Pancreas (tissue), 10 donors: ENCODE measurements at regions of chr10 and their contacts with region 1.

Region 1: DNA sequence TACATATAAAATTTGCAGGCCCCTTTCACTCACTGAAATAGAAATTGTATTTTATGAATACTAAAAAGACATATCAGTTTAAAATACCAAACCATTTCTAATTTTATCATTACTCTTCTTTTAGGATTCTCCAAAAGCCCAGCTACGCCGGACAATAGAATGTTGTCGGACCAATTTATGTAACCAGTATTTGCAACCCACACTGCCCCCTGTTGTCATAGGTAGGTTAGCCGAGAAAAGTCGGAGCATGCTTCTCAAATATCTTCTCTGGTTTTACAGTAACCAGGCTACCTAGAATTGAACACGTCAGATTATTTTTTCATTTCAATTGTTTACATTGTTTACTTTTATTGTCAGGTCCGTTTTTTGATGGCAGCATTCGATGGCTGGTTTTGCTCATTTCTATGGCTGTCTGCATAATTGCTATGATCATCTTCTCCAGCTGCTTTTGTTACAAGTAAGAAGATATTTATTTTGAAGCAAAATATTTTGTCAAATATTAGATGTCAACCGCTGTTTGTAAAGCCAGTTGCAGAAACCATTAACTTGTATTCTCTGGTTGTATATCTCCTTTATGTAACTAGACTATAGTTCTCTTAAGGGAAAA is 57.6 kb downstream of the MMRN2 start:
- DNase-seq: peak in 3 of 6 donors; percentile 57 to 71 (median 64)
- ATAC-seq: peak; percentile 74 to 93 (median 81)
- H3K4me3 ChIP-seq: no peak overlapping the region
- H3K27ac ChIP-seq: no peak overlapping the region
- H3K4me1 ChIP-seq: peaks cover 11 to 15% (median 13%) of the 10 kb centered on the region in 3 donors
- H3K27me3 ChIP-seq: no peaks in the 10 kb centered on the region
- CTCF ChIP-seq: peak in 3 of 4 donors; percentile 51 to 58 (median 56)

Region 2: DNA sequence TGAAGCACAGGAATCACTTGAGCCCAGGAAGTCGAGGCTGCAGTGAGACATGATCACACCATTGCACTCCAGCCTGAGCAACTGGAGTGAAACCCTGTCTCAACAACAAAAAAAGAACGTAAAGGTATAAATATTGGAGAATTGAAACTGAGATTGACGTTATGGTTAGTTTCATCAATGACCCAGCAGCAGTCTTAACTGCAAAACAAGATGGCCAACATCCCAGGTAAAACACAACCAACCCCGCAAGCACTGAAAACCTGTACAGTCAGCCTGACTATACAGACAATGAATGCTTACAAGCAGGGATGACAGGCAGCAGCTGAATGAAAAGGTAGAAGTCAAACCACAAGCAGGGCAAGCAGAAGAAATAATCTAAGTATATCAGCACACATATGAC is 412.9 kb before region 1 on chr10:
- intact Hi-C with region 1: no loop called
- DNase-seq: no peak
- ATAC-seq: no peak
- H3K4me3 ChIP-seq: no peak overlapping the region
- H3K27ac ChIP-seq: no peak overlapping the region
- H3K4me1 ChIP-seq: no peaks in the 10 kb centered on the region
- H3K27me3 ChIP-seq: no peaks in the 10 kb centered on the region
- CTCF ChIP-seq: no peak

Region 3: DNA sequence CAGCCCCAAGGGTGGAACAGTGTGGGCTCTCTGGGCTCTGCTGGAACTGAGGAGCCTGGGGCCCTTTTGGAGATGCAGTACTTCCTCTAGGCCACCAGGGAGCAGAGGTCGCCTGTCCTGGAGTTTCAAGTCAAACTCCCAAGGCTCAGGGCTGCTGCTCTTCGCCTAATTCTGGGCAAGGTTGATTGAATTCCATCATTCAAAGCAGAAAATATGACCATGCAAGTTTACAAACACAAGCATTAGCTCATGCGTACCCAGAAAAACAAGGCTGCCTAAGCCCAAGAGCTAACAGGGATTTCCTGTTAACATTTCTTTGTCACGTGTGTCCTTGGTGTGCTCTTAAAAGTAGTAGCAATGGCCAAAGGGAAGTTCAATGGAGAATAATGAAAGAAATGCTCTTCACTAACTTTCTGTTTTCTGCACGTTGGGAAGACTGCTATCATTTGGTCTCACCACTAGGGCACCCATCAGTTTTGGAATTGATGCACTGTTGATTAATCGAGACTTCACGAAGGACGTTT is 211.3 kb before region 1 on chr10:
- intact Hi-C with region 1: loop called in 1 of 3 experiments (anchors 5 kb)
- DNase-seq: peak in 4 of 6 donors; percentile 39 to 68 (median 52)
- ATAC-seq: peak; percentile 83 to 96 (median 92)
- H3K4me3 ChIP-seq: no peak overlapping the region
- H3K27ac ChIP-seq: no peak overlapping the region
- H3K4me1 ChIP-seq: no peaks in the 10 kb centered on the region
- H3K27me3 ChIP-seq: no peaks in the 10 kb centered on the region
- CTCF ChIP-seq: peak; percentile 84 to 88 (median 86)

Region 4: DNA sequence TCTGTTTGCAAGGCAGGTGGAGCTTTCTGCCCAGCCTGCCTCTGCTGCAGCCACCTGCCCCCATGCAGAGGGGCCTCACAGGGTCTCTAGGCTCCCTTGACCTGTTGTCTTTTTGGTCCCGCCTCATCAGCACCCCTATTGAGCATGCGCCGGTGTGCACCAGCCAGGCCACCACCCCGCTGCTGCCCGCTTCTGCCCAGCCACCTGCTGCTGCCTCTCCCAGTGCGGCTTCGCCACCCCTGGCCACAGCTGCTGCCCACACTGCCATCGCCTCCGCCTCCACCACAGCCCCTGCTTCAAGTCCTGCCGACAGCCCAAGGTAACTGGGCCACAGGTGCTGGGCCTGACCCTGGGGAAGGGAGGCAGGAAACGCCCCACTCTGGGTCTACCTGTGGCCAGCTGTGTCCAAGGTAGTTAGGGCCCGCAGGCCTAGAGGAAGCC is 193.4 kb before region 1 on chr10:
- intact Hi-C with region 1: loop called in 1 of 3 experiments (anchors 5 kb)
- DNase-seq: peak in 2 of 6 donors; percentile 26 to 70
- ATAC-seq: no peak
- H3K4me3 ChIP-seq: no peak overlapping the region
- H3K27ac ChIP-seq: no peak overlapping the region
- H3K4me1 ChIP-seq: no peaks in the 10 kb centered on the region
- H3K27me3 ChIP-seq: no peaks in the 10 kb centered on the region
- CTCF ChIP-seq: no peak

Region 5: DNA sequence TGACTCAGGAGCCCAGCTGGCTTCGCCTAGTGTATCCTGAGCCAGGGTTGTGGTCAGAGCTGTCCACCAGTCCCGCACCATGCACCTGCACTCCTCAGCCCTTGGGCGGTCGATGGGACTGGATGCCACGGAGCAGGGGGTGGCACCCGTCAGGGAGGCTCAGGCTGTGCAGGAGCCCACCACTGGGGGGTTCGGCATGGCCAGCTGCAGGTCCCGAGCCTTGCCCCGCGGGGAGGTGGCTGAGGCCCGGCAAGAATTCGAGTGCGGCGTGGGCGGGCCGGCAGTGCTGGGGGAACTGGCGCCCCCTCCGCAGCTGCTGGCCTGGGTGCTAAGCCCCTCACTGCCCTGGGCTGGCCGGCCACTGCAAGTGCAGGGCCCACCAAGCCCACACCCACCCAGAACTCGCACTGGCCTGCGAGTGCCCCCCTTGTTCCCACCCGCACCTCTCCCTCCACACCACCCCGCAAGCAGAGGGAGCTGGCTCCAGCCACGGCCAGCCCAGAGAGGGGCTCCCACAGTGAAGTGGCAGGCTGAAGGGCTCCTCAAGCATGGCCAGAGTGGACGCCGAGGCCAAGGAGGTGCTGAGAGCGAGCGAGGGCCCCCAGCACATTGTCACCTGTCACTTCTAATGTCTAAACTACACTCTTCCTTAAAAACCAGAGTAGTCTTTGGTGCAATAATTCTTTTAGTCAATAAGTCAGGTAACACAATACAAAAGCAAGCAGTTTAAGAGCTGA is 131.3 kb after region 1 on chr10:
- intact Hi-C with region 1: no loop called
- DNase-seq: peak in 1 of 6 donors; percentile 55
- ATAC-seq: no peak
- H3K4me3 ChIP-seq: no peak overlapping the region
- H3K27ac ChIP-seq: no peak overlapping the region
- H3K4me1 ChIP-seq: no peaks in the 10 kb centered on the region
- H3K27me3 ChIP-seq: no peaks in the 10 kb centered on the region
- CTCF ChIP-seq: no peak

Region 6: GRCh38 chr10:87093632-87094372 is 194.0 kb after region 1 on chr10:
- intact Hi-C with region 1: no loop called
- DNase-seq: peak; percentile 68 to 88 (median 76)
- ATAC-seq: peak; percentile 20 to 45 (median 32)
- H3K4me3 ChIP-seq: peak overlapping the region; percentile 53 to 88 (median 74)
- H3K27ac ChIP-seq: peak overlapping the region; percentile 84 to 95 (median 95)
- H3K4me1 ChIP-seq: peaks cover 10 to 37% (median 26%) of the 10 kb centered on the region in 3 donors
- H3K27me3 ChIP-seq: no peaks in the 10 kb centered on the region
- CTCF ChIP-seq: no peak